IMR-90 (cell line): ENCODE measurements at regions of chr6 and their contacts with region 1.

Region 1: DNA sequence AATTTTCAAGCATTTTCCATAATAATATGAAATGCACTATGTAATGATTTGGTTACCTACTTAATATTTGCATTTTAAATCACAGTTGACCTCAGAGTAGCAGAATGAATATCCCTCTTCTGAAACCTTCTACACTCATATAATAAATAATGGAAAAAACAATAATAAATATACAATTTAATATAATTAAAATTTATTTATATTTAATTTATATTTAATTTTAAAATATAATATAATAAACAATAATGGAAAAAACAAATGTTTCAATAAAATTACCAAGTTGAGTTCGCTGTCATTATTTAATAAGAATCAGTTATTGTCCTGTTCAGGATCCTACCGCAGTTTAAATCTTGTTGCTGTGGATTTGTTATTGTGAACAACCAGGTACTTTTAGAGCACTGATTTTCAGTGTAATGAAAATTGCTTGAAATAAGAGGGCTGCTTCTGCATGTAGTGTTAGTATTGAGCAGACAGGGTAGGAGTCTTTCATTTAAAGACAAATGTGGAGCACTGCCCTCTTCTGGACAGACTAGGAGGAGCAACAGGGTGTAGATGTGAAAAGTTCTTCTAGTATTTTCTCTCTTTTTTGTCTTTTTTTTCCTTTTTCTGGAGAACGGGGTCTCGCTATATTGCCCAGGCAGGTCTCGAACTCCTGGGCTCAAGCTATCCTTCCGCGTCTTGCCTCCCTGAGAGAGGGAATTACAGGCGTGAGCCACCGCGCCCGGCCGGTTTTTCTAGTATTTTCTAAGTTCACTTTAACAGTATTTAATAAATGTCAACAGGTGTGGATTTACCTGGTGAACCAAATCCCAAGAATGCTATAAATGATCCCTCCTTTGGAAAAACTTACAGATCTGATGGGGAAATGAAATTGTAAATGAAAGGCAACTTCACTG is 13.6 kb downstream of the TRAPPC3L start:
- DNase-seq: peak; percentile 82
- ATAC-seq: peak; percentile 86
- H3K4me3 ChIP-seq: no peak overlapping the region
- H3K27ac ChIP-seq: no peak overlapping the region
- H3K4me1 ChIP-seq: peaks cover 13% of the 10 kb centered on the region
- H3K27me3 ChIP-seq: no peaks in the 10 kb centered on the region
- CTCF ChIP-seq: peak; percentile 78
- POLR2A ChIP-seq: no peak
- RAD21 ChIP-seq: peak; percentile 74

Region 2: GRCh38 chr6:115969207-115969929 is 562.6 kb before region 1 on chr6:
- CTCF ChIA-PET with region 1: no interaction called
- POLR2A ChIA-PET with region 1: no interaction called
- dilution Hi-C with region 1: no loop called
- in situ Hi-C with region 1: no loop called
- intact Hi-C with region 1: no loop called
- DNase-seq: no peak
- ATAC-seq: peak; percentile 32; the same call in 1 of the 2 replicates
- H3K4me3 ChIP-seq: no peak overlapping the region
- H3K27ac ChIP-seq: no peak overlapping the region
- H3K4me1 ChIP-seq: no peaks in the 10 kb centered on the region
- H3K27me3 ChIP-seq: no peaks in the 10 kb centered on the region
- CTCF ChIP-seq: no peak
- POLR2A ChIP-seq: no peak
- RAD21 ChIP-seq: no peak

Region 3: DNA sequence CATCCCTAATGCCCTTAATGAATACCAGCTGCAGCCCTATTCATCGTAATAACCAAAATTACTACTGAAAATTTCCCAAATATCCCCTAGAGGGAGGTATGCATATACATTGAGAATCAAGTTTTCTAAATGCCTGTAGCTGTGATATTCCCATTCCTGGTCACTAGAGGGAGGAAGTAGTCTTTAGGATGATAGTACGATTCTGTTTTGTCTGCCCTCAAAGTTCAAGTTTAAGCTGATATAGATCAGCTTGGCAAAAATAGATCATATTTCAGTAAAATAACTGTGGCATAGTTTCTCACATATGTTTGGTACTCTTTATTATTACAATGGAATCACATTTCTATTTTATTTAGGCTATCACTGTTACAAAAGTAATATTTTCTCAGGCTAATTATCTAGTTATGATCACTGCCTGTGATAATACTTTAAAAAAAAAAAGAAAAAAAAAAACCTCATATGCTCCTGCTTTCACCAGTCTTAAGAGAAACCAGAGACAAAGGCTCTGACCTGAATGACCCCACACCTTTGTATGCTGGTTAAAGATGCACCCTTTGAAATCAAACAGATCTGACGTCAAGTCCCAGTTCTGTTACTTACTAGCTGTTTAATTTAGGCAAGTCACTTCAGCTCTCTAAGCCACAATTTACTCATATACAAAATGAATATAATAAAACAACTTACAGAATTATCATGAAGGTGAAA is 263.2 kb before region 1 on chr6:
- CTCF ChIA-PET with region 1: interaction called, 12 read pairs
- POLR2A ChIA-PET with region 1: no interaction called
- dilution Hi-C with region 1: no loop called
- in situ Hi-C with region 1: loop called (anchors 10 kb)
- intact Hi-C with region 1: loop called (anchors 1 kb)
- DNase-seq: peak; percentile 86
- ATAC-seq: peak; percentile 97
- H3K4me3 ChIP-seq: no peak overlapping the region
- H3K27ac ChIP-seq: no peak overlapping the region
- H3K4me1 ChIP-seq: peaks cover 5% of the 10 kb centered on the region; the same call in 1 of the 2 replicates
- H3K27me3 ChIP-seq: no peaks in the 10 kb centered on the region
- CTCF ChIP-seq: peak; percentile 99
- POLR2A ChIP-seq: no peak
- RAD21 ChIP-seq: peak; percentile 90

Region 4: DNA sequence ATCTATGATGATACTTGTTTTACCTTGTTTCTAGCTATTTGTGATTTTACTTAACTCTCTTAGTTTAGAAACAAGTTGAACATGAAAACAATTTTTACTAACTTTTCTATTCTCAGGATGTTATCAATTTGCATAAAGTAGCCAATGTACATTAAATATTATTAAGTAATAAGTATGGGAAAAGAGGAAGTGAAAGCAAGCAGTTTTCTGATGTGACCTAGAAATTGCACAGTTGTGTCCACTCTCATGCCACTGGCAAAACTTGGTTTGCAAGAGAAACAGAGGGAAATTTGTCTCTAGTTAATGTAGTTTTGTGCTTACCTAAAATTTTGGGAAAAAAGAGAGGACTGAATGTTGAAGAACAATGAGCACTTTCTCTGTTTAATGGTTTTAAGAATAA is 232.9 kb before region 1 on chr6:
- CTCF ChIA-PET with region 1: interaction called, 3 read pairs
- POLR2A ChIA-PET with region 1: no interaction called
- dilution Hi-C with region 1: no loop called
- in situ Hi-C with region 1: loop called (anchors 10 kb)
- intact Hi-C with region 1: no loop called
- DNase-seq: no peak
- ATAC-seq: no peak
- H3K4me3 ChIP-seq: no peak overlapping the region
- H3K27ac ChIP-seq: no peak overlapping the region
- H3K4me1 ChIP-seq: no peaks in the 10 kb centered on the region
- H3K27me3 ChIP-seq: no peaks in the 10 kb centered on the region
- CTCF ChIP-seq: no peak
- POLR2A ChIP-seq: no peak
- RAD21 ChIP-seq: no peak

Region 5: DNA sequence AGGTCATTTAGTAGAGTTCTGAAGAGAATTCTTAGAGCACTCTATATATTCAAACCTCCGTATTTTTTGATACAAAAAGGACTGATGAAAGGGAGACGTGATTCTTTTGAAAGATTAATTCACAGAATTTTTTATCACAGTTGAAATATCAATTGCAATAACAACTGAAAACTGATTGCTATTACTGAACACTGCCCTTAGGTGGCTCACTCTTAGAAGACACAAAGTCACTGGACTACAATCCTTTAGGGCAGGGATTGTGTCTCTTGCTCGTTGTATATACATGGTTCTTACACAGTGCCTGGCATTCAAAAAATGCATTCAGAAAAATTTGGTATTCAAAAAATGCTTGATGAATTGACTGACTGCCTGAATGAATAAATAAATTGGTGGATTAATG is 87.8 kb before region 1 on chr6:
- CTCF ChIA-PET with region 1: no interaction called
- POLR2A ChIA-PET with region 1: no interaction called
- dilution Hi-C with region 1: no loop called
- in situ Hi-C with region 1: no loop called
- intact Hi-C with region 1: loop called (anchors 2 kb)
- DNase-seq: peak; percentile 51
- ATAC-seq: peak; percentile 38
- H3K4me3 ChIP-seq: no peak overlapping the region
- H3K27ac ChIP-seq: no peak overlapping the region
- H3K4me1 ChIP-seq: peaks cover 13% of the 10 kb centered on the region
- H3K27me3 ChIP-seq: no peaks in the 10 kb centered on the region
- CTCF ChIP-seq: peak; percentile 55
- POLR2A ChIP-seq: no peak
- RAD21 ChIP-seq: peak; percentile 39

Region 6: DNA sequence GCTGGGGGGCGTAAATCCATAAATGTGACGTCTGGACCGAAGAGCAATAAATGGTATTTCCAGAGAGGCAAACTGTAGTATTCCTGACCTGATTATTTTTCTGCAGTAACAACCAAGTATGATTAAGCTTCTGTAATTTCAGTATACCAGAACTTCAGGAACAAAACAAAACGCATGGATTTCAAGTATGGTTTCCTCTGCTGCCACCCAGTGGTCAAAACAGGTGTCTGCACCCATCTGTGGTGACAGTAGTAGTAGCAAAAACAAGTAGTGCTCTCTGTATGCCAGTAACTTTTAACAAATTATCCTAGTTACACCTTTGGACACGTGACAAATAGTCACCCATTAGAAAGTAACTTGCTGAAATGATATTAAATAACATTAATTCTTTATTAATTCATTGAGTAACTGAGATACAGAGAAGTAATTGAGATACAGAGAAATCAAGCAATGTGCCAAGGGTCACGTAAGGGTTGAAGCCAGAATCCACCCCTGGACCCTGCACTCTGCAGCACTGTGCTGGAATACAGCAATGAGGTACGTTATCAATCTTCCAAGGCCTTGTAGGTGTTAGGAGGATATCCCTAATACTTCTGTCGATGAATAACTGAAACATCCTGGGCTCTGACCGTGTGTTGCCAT is 29.6 kb after region 1 on chr6:
- CTCF ChIA-PET with region 1: interaction called, 20 read pairs
- POLR2A ChIA-PET with region 1: interaction called, 3 read pairs
- dilution Hi-C with region 1: no loop called
- in situ Hi-C with region 1: no loop called
- intact Hi-C with region 1: loop called (anchors 1 kb)
- DNase-seq: peak; percentile 75
- ATAC-seq: peak; percentile 72
- H3K4me3 ChIP-seq: no peak overlapping the region
- H3K27ac ChIP-seq: no peak overlapping the region
- H3K4me1 ChIP-seq: peaks cover 10% of the 10 kb centered on the region
- H3K27me3 ChIP-seq: no peaks in the 10 kb centered on the region
- CTCF ChIP-seq: peak; percentile 89
- POLR2A ChIP-seq: no peak
- RAD21 ChIP-seq: peak; percentile 88